Activated naive CD4-positive, alpha-beta T cell treated with anti-CD3 and anti-CD28 coated beads, Interleukin-2, amount 10 ng/mL, durations not matched to agents 7 days and 5 days (primary cell): ENCODE measurements at regions of chr7 and their contacts with region 1.

Region 1: GRCh38 chr7:129611246-129612111 is at the start of gene NRF1:
- DNase-seq: peak; percentile 92
- H3K4me3 Mint-ChIP-seq: peak within 1 kb of the TSS; percentile 98
- H3K27ac Mint-ChIP-seq: peak within 1 kb of the TSS; percentile 96
- H3K4me1 Mint-ChIP-seq: peaks cover 63% of the 10 kb centered on the region
- H3K27me3 Mint-ChIP-seq: no peaks in the 10 kb centered on the region

Region 2: GRCh38 chr7:129635300-129636029 is 24.0 kb after region 1 on chr7:
- CTCF ChIA-PET with region 1: interaction called, 13 read pairs
- DNase-seq: peak; percentile 76
- H3K4me3 Mint-ChIP-seq: no peak overlapping the region
- H3K27ac Mint-ChIP-seq: no peak overlapping the region
- H3K4me1 Mint-ChIP-seq: peaks cover 13% of the 10 kb centered on the region
- H3K27me3 Mint-ChIP-seq: no peaks in the 10 kb centered on the region

Region 3: GRCh38 chr7:129643550-129644170 is 32.2 kb after region 1 on chr7:
- CTCF ChIA-PET with region 1: interaction called, 11 read pairs
- DNase-seq: no peak
- H3K4me3 Mint-ChIP-seq: no peak overlapping the region
- H3K27ac Mint-ChIP-seq: no peak overlapping the region
- H3K4me1 Mint-ChIP-seq: no peaks in the 10 kb centered on the region
- H3K27me3 Mint-ChIP-seq: no peaks in the 10 kb centered on the region

Region 4: GRCh38 chr7:129825496-129826267 is 214.2 kb after region 1 on chr7:
- CTCF ChIA-PET with region 1: interaction called, 13 read pairs
- DNase-seq: peak; percentile 92
- H3K4me3 Mint-ChIP-seq: peak overlapping the region; percentile 90
- H3K27ac Mint-ChIP-seq: peak overlapping the region; percentile 76
- H3K4me1 Mint-ChIP-seq: peaks cover 23% of the 10 kb centered on the region
- H3K27me3 Mint-ChIP-seq: peaks cover 25% of the 10 kb centered on the region